Activated T-helper 2 cell treated with anti-CD3 and anti-CD28 coated beads, Interferon-gamma antibody, Interleukin-2, Interleukin-4, amounts not matched to agents 10 μg/mL and 5 μg/mL and 100 μg/mL, durations not matched to agents 14 hours and 24 hours and 36 hours (primary cell): ENCODE measurements at regions of chr20 and their contacts with region 1.

Region 1: DNA sequence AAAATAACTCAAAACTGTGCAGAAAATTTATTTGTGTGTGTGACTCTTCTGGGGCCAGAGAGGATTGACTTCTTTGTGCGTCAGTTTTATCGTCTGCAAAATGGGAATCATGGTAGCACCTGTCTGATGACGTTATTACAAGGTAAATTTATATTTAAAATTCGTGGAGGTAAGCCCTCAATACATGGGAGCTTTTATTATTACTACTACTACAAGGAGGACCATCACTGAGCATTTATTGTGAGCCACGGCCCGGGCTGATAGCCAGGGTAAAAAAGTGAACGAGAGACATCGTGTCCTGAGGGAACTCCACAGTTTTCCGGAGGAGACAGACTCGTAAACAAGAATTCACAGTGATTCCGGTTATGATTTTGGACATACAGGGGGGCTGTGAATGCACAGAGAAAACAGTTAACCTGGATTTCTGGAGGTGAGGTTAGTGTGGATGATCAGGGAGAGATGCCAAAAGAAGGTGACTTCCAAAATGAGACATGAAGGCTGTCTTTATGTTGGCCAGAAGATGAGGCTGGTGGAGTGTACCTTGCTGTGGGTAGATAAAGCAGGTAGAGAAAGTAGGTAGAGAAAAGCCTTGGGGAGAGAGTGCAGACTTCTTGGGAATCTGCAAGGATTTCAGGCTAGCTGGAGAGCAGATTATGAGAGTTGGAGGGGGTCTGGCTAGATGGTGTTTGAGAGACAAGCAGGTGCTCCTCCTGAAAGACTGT is 10.6 kb upstream of the SERINC3 start:
- DNase-seq: no peak
- H3K4me3 Mint-ChIP-seq: no peak overlapping the region
- H3K27ac Mint-ChIP-seq: no peak overlapping the region
- H3K4me1 Mint-ChIP-seq: peaks cover 2% of the 10 kb centered on the region
- H3K27me3 Mint-ChIP-seq: peaks cover 7% of the 10 kb centered on the region

Region 2: GRCh38 chr20:44217342-44218092 is 314.9 kb before region 1 on chr20:
- intact Hi-C with region 1: loop called (anchors 1 kb)
- DNase-seq: peak; percentile 58
- H3K4me3 Mint-ChIP-seq: peak overlapping the region; percentile 81
- H3K27ac Mint-ChIP-seq: peak overlapping the region; percentile 72
- H3K4me1 Mint-ChIP-seq: peaks cover 45% of the 10 kb centered on the region
- H3K27me3 Mint-ChIP-seq: no peaks in the 10 kb centered on the region

Region 3: GRCh38 chr20:44471481-44471882 is 60.9 kb before region 1 on chr20:
- intact Hi-C with region 1: no loop called
- DNase-seq: no peak
- H3K4me3 Mint-ChIP-seq: no peak overlapping the region
- H3K27ac Mint-ChIP-seq: no peak overlapping the region
- H3K4me1 Mint-ChIP-seq: peaks cover 10% of the 10 kb centered on the region
- H3K27me3 Mint-ChIP-seq: peaks cover 3% of the 10 kb centered on the region

Region 4: GRCh38 chr20:44560229-44560628 is 27.8 kb after region 1 on chr20:
- intact Hi-C with region 1: no loop called
- DNase-seq: no peak
- H3K4me3 Mint-ChIP-seq: no peak overlapping the region
- H3K27ac Mint-ChIP-seq: no peak overlapping the region
- H3K4me1 Mint-ChIP-seq: no peaks in the 10 kb centered on the region
- H3K27me3 Mint-ChIP-seq: peaks cover 31% of the 10 kb centered on the region

Region 5: DNA sequence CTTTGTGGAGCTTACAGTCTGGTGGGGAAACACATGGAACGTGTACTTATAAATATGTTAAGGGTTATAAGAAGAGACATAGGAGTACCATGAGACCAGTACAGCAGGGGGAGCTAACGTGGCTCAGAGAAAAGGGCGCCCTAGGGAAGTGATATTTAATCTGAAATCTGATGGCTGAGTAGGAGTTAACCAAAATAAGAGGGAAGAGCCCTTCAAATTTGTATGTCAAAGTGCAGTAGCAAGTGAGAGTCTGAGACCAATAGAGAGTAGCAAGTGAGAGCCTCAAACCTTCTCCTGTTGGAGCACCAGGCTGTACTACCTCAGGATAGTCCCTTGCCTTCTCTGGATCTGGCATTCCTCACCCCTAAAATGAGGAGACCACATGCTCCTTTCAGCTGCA is 43.9 kb after region 1 on chr20:
- intact Hi-C with region 1: loop called (anchors 5 kb)
- DNase-seq: no peak
- H3K4me3 Mint-ChIP-seq: no peak overlapping the region
- H3K27ac Mint-ChIP-seq: peak overlapping the region; percentile 58
- H3K4me1 Mint-ChIP-seq: peaks cover 37% of the 10 kb centered on the region
- H3K27me3 Mint-ChIP-seq: no peaks in the 10 kb centered on the region